Activated naive CD4-positive, alpha-beta T cell treated with anti-CD3 and anti-CD28 coated beads for 36 hours (primary cell): ENCODE measurements at regions of chr11 and their contacts with region 1.

Region 1: DNA sequence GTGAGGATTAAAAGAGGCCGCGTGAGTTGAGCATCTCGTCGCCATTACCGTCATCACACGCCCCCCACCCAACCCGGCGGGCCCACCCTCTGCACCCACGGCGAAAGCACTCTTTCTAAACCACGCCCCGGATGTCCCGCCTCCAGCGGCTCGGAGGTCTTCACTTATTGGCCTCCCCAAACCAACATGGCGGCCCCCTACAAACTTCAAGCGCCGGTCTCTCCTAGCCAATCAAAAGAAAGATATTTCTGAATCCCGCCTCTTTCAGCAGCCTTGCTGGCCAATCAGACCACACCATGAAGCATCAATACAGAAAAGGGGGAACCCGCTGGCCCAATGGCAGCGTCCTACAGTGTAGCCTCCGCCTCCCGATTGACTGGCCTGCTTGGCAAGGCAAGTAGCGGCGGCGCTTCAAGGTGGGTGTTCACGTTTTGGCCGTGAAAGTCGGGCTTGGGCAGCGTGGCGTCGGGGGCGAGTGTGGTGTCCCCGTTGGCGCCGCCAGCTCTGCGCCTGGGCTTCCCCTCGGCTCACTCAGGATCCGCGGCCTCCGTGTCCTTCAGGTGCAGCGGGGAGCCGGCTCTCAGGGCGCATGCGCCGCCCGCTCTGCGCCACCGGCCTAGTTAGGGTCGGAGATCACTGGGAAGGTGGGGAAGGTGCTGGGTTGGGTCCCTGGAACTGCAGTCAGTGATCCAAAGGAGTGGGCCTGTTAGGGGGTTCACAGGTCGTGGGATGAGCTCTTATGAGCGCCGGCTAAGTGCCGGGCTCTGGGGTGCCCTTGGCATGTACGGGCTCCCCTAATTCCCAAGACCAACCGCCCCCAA is at the start of gene NDUFS8:
- DNase-seq: peak; percentile 98
- H3K4me3 Mint-ChIP-seq: peak within 1 kb of the TSS; percentile 91
- H3K27ac Mint-ChIP-seq: peak within 1 kb of the TSS; percentile 88
- H3K4me1 Mint-ChIP-seq: peaks cover 23% of the 10 kb centered on the region
- H3K27me3 Mint-ChIP-seq: no peaks in the 10 kb centered on the region
- total RNA-seq, gene NDUFS8: 142 to 162 TPM

Region 2: GRCh38 chr11:68003846-68004550 is 26.5 kb before region 1 on chr11 and contains the start of gene UNC93B1:
- CTCF ChIA-PET with region 1: no interaction called
- intact Hi-C with region 1: loop called (anchors 2 kb)
- DNase-seq: peak; percentile 89
- H3K4me3 Mint-ChIP-seq: peak within 1 kb of the TSS; percentile 82
- H3K27ac Mint-ChIP-seq: no peak within 1 kb of the TSS
- H3K4me1 Mint-ChIP-seq: peaks cover 16% of the 10 kb centered on the region
- H3K27me3 Mint-ChIP-seq: no peaks in the 10 kb centered on the region
- total RNA-seq, gene UNC93B1: 18.4 to 19.0 TPM

Region 3: GRCh38 chr11:68206187-68206601 is 175.7 kb after region 1 on chr11:
- CTCF ChIA-PET with region 1: interaction called, 4 read pairs
- intact Hi-C with region 1: loop called (anchors 10 kb)
- DNase-seq: peak; percentile 23
- H3K4me3 Mint-ChIP-seq: no peak overlapping the region
- H3K27ac Mint-ChIP-seq: no peak overlapping the region
- H3K4me1 Mint-ChIP-seq: peaks cover 73% of the 10 kb centered on the region
- H3K27me3 Mint-ChIP-seq: no peaks in the 10 kb centered on the region